ENCODE measurements at regions of chr6 and their contacts with region 1.

Region 1: DNA sequence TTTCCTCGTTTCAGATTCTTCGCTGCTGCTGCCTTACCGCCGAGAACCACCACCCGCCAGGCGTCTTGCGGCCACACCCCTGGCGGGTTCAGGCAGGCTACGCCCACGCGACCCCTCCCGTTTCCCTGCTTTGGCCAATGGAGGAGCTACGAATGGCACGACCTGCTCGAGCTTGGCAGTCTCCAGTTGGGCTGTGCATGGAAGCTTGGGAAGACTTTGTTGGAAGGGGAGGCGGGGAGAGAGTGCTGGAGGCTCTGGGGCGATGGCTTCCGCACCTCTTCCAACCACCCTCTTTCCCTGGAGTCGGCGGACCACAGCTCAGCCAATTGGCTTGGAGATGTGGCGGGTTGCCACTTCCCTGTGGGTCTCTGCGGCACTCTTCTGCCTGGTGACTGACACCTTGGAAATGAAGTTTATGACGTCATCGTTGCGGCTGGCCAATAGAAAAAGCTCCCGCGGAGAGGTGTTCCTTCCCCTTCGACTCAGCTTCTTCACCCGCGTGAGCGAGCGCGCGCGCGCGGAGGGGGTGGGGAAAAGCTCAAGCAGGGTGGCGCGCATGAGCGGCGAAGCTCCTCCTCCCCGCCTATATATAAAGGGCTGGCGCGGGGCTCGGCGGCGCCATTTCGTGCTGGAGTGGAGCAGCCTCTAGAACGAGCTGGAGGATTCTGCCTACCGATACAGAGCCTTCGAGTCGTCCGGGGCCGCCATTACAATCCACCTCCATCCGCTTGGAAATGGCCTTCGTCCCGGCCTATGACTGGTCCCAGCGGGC is 3.4 kb downstream of the BRD2 start:
- DNase-seq: peak; percentile 100
- H3K4me3 Mint-ChIP-seq: peak overlapping the region; percentile 97
- H3K27ac Mint-ChIP-seq: peak overlapping the region; percentile 98
- H3K4me1 Mint-ChIP-seq: peaks cover 29% of the 10 kb centered on the region
- H3K27me3 Mint-ChIP-seq: no peaks in the 10 kb centered on the region

Region 2: DNA sequence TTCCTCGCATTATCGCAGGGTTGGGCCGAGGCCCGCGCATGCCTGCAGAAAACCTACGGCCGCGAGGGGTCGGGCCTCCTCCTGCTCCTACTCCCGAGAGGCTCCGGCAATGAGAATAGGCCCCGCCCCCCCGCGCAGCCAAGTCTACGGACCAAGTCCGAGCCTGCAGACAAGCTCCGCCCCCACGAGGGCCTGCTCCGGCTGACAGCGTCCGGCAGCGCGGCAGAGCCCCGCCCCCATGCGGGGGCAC is 776.2 kb before region 1 on chr6:
- CTCF ChIA-PET with region 1: interaction called, 3 read pairs
- POLR2A ChIA-PET with region 1: interaction called, 14 read pairs
- DNase-seq: peak; percentile 100
- H3K4me3 Mint-ChIP-seq: peak overlapping the region; percentile 95
- H3K27ac Mint-ChIP-seq: peak overlapping the region; percentile 98
- H3K4me1 Mint-ChIP-seq: peaks cover 35% of the 10 kb centered on the region
- H3K27me3 Mint-ChIP-seq: peaks cover 2% of the 10 kb centered on the region

Region 3: GRCh38 chr6:32853541-32854375 is 118.0 kb before region 1 on chr6 and contains the starts of genes PSMB9 and TAP1:
- CTCF ChIA-PET with region 1: interaction called, 35 read pairs
- POLR2A ChIA-PET with region 1: interaction called, 301 read pairs
- DNase-seq: peak; percentile 95
- H3K4me3 Mint-ChIP-seq: peak within 1 kb of the TSS; percentile 100
- H3K27ac Mint-ChIP-seq: peak within 1 kb of the TSS; percentile 99
- H3K4me1 Mint-ChIP-seq: peaks cover 59% of the 10 kb centered on the region
- H3K27me3 Mint-ChIP-seq: no peaks in the 10 kb centered on the region
- total RNA-seq, gene PSMB9: 368 to 372 TPM
- total RNA-seq, gene TAP1: 410 to 412 TPM

Region 4: GRCh38 chr6:32894080-32895005 is 77.4 kb before region 1 on chr6:
- CTCF ChIA-PET with region 1: interaction called, 7 read pairs
- POLR2A ChIA-PET with region 1: interaction called, 179 read pairs
- DNase-seq: peak; percentile 95
- H3K4me3 Mint-ChIP-seq: peak overlapping the region; percentile 99
- H3K27ac Mint-ChIP-seq: peak overlapping the region; percentile 91
- H3K4me1 Mint-ChIP-seq: peaks cover 40% of the 10 kb centered on the region
- H3K27me3 Mint-ChIP-seq: peaks cover 8% of the 10 kb centered on the region

Region 5: GRCh38 chr6:32952817-32953739 is 18.7 kb before region 1 on chr6 and contains the start of gene HLA-DMA:
- CTCF ChIA-PET with region 1: interaction called, 259 read pairs
- POLR2A ChIA-PET with region 1: interaction called, 538 read pairs
- DNase-seq: peak; percentile 83
- H3K4me3 Mint-ChIP-seq: peak within 1 kb of the TSS; percentile 81
- H3K27ac Mint-ChIP-seq: peak within 1 kb of the TSS; percentile 67
- H3K4me1 Mint-ChIP-seq: peaks cover 56% of the 10 kb centered on the region
- H3K27me3 Mint-ChIP-seq: no peaks in the 10 kb centered on the region
- total RNA-seq, gene HLA-DMA: 54.0 to 54.3 TPM

Region 6: GRCh38 chr6:33040157-33040556 is 68.4 kb after region 1 on chr6:
- CTCF ChIA-PET with region 1: no interaction called
- POLR2A ChIA-PET with region 1: no interaction called
- DNase-seq: no peak
- H3K4me3 Mint-ChIP-seq: no peak overlapping the region
- H3K27ac Mint-ChIP-seq: no peak overlapping the region
- H3K4me1 Mint-ChIP-seq: no peaks in the 10 kb centered on the region
- H3K27me3 Mint-ChIP-seq: peaks cover 70% of the 10 kb centered on the region

Region 7: GRCh38 chr6:33248925-33249731 is 277.4 kb after region 1 on chr6:
- CTCF ChIA-PET with region 1: interaction called, 3 read pairs
- POLR2A ChIA-PET with region 1: interaction called, 44 read pairs
- DNase-seq: peak; percentile 98
- H3K4me3 Mint-ChIP-seq: peak overlapping the region; percentile 74
- H3K27ac Mint-ChIP-seq: peak overlapping the region; percentile 87
- H3K4me1 Mint-ChIP-seq: peaks cover 46% of the 10 kb centered on the region
- H3K27me3 Mint-ChIP-seq: no peaks in the 10 kb centered on the region

Region 8: DNA sequence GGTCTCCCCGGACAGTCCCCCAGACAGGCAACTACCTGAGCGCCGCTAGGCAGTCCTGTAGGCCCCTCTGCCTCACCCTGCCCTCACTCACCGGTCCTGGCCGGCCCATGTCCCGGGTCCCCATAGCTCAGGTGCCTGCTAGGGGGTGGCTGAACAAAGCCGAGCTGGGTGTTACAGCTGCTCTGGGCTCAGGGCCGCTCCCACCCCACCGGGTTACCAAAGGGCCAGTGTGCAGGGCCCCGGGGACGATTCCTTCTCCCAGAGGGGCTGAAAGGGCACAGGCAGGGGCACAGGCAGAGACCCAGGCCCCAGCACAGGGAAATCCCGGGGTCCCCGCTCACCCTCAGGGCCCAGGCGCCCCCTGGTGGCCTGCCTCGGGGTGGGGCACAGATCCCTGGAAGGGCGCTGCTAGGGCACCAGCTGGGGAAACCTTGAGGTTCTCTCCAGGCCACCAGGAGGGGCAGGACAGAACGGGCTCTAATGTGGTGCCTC is 1055.7 kb after region 1 on chr6:
- CTCF ChIA-PET with region 1: no interaction called
- POLR2A ChIA-PET with region 1: no interaction called
- DNase-seq: peak; percentile 70
- H3K4me3 Mint-ChIP-seq: no peak overlapping the region
- H3K27ac Mint-ChIP-seq: no peak overlapping the region
- H3K4me1 Mint-ChIP-seq: no peaks in the 10 kb centered on the region
- H3K27me3 Mint-ChIP-seq: peaks cover 2% of the 10 kb centered on the region

Measured in activated CD4-positive, alpha-beta memory T cell treated with anti-CD3 and anti-CD28 coated beads, Interleukin-2, amount 10 ng/mL, durations not matched to agents 7 days and 5 days (primary cell).